WTC11 (cell line): ENCODE measurements at regions of chr4 and their contacts with region 1.

Region 1: DNA sequence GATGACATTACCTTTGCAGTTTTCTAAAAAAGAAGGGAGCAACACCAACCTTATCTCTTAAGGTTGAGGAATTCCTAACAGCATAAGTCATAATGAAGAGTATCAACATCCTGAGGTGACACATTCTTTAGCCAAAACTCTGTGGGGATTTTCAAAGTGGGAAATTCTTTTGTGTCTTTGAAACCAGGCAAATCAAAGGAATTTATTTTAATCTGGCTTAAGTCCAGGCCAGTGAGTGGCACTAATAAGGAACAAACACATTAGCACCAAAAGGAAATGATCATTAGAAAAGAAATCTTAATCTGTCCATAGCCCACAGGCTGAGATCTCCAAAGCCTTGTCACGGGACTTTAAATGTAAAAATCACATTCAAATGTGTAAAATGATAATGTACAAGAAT is 110.1 kb downstream of the LARP7 start:
- DNase-seq: no peak
- ATAC-seq: peak; percentile 36
- H3K4me3 Mint-ChIP-seq: peak overlapping the region; percentile 47
- H3K27ac Mint-ChIP-seq: peak overlapping the region; percentile 99
- H3K4me1 Mint-ChIP-seq: peaks cover 64% of the 10 kb centered on the region
- H3K27me3 Mint-ChIP-seq: no peaks in the 10 kb centered on the region
- CTCF ChIP-seq: no peak

Region 2: GRCh38 chr4:112759313-112759712 is 12.3 kb after region 1 on chr4:
- CTCF ChIA-PET with region 1: interaction called, 15 read pairs
- POLR2A ChIA-PET with region 1: interaction called, 12 read pairs
- DNase-seq: peak; percentile 40
- ATAC-seq: peak; percentile 86
- H3K4me3 Mint-ChIP-seq: no peak overlapping the region
- H3K27ac Mint-ChIP-seq: peak overlapping the region; percentile 96
- H3K4me1 Mint-ChIP-seq: peaks cover 61% of the 10 kb centered on the region
- H3K27me3 Mint-ChIP-seq: no peaks in the 10 kb centered on the region
- CTCF ChIP-seq: no peak

Region 3: DNA sequence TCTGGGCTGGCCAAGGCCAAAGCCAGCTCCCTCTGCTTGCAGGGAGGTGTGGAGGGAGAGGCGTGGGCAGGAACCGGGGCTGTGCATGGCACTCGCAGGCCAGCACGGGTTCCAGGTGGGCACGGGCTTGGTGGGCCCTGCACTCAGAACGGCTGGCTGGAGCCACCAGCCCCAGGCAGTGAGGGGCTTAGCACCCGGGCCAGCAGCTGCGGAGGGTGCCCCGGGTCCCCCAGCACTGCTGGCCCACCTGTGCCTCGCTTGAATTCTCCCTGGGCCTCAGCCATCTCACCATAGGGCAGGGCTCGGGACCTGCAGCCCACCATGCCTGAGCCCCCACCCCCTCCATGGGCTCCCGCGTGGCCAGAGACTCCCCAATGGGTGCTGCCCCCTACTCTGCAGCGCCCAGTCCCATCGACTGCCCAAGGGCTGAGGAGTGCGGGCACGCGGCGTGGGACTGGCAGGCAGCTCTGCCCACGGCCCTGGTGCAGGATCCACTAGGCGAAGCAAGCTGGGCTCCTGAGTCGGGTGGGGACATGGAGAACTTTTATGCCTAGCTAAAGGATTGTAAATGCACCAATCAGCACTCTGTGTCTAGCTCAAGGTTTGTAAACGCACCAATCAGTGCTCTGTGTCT is 83.8 kb after region 1 on chr4:
- CTCF ChIA-PET with region 1: no interaction called
- POLR2A ChIA-PET with region 1: no interaction called
- DNase-seq: no peak
- ATAC-seq: no peak
- H3K4me3 Mint-ChIP-seq: no peak overlapping the region
- H3K27ac Mint-ChIP-seq: no peak overlapping the region
- H3K4me1 Mint-ChIP-seq: no peaks in the 10 kb centered on the region
- H3K27me3 Mint-ChIP-seq: peaks cover 8% of the 10 kb centered on the region; the same call in 1 of the 2 replicates
- CTCF ChIP-seq: no peak